Prostate gland (tissue), 2 donors: ENCODE measurements at regions of chr22 and their contacts with region 1.

Region 1: DNA sequence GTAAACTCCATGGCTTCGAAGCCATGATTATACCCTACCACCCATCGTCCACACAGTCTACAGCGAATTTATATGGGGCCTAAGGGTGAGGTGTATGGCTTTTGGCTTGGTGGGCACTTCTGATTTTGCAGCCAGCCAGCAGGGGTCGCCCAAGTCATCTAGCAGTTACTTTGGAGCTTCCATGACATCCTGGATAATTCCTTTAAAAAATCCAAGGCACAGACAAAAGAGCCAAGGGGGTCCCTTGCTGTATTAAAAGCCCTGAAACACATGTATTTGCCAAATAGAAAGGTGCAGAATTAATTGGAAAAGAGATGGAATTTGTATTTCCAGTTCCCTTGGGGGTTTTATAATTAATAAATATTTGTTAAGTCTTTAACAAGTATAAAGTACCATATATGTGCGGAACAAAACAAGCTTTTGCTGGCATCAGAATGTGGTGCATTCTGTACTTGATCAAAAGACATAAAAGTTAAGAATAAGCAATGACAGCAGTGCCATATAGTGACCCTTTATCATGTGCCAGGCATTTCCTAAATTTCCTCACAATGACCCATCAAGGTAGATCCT is 132.8 kb upstream of the PITPNB start:
- DNase-seq: peak; percentile 44
- H3K4me3 ChIP-seq: no peak overlapping the region
- H3K27ac ChIP-seq: no peak overlapping the region
- H3K4me1 ChIP-seq: no peaks in the 10 kb centered on the region
- H3K27me3 ChIP-seq: no peaks in the 10 kb centered on the region
- CTCF ChIP-seq: peak in 3 of 4 experiments; percentile 68 to 82 (median 77)
- POLR2A ChIP-seq: no peak

Region 2: DNA sequence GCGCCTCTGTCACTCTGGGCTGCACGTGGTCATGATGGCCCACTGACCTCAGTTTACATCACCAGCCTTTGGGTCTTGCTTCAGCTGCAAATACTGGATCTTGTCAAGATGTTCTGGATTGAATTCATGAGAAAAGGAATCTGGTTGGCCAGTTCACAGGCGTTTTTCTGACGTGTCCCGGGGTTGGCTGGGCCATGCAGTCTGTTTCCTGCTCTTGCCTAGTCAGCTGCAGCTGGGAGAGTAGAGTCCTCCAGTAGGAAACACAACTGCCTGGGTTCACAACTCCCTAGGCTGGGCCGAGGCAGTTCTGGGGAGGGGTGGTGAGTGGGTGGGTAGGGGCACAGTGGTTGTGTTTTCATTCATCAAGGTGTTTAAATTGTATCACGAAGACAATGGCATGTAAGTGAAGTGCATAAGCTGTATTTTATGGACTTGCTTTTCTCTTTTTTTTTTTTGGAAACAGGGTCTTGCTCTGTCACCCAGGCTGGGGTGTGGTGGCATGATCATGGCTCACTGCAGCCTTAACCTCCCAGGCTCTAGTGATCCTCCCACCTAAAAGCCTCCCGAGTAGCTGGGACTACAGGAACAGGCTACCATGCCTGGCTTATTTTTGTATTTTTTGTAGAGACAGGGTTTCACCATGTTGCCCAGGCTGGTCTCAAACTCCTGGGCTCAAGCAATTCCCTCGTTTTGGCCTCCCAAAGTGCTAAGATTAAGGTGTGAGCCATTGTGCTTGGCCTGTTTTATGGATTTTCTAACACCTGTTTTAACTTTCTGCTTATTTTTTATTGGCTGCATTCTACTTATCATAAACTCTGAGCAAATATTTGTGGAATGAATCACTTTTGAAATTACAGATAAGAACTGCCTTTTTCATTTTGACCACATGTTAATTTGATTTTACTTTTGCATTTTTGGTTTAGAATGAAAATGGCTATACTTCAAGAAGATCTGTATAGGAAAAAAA is 78.9 kb before region 1 on chr22:
- intact Hi-C with region 1: no loop called
- DNase-seq: no peak
- H3K4me3 ChIP-seq: no peak overlapping the region
- H3K27ac ChIP-seq: no peak overlapping the region
- H3K4me1 ChIP-seq: no peaks in the 10 kb centered on the region
- H3K27me3 ChIP-seq: no peaks in the 10 kb centered on the region
- CTCF ChIP-seq: no peak
- POLR2A ChIP-seq: no peak

Region 3: GRCh38 chr22:28154861-28155260 is 103.0 kb after region 1 on chr22:
- intact Hi-C with region 1: no loop called
- DNase-seq: no peak
- H3K4me3 ChIP-seq: no peak overlapping the region
- H3K27ac ChIP-seq: no peak overlapping the region
- H3K4me1 ChIP-seq: no peaks in the 10 kb centered on the region
- H3K27me3 ChIP-seq: no peaks in the 10 kb centered on the region
- CTCF ChIP-seq: no peak
- POLR2A ChIP-seq: no peak

Region 4: GRCh38 chr22:28180804-28181731 is 129.2 kb after region 1 on chr22:
- intact Hi-C with region 1: loop called (anchors 10 kb)
- DNase-seq: peak; percentile 13
- H3K4me3 ChIP-seq: no peak overlapping the region
- H3K27ac ChIP-seq: no peak overlapping the region
- H3K4me1 ChIP-seq: no peaks in the 10 kb centered on the region
- H3K27me3 ChIP-seq: no peaks in the 10 kb centered on the region
- CTCF ChIP-seq: no peak
- POLR2A ChIP-seq: no peak

Region 5: GRCh38 chr22:28442264-28442710 is 390.4 kb after region 1 on chr22:
- intact Hi-C with region 1: loop called (anchors 5 kb)
- DNase-seq: peak; percentile 58
- H3K4me3 ChIP-seq: peak overlapping the region; percentile 45
- H3K27ac ChIP-seq: peak overlapping the region; percentile 62 to 67
- H3K4me1 ChIP-seq: peaks cover 6% of the 10 kb centered on the region
- H3K27me3 ChIP-seq: no peaks in the 10 kb centered on the region
- CTCF ChIP-seq: peak in 3 of 4 experiments; percentile 49 to 77 (median 71)
- POLR2A ChIP-seq: no peak